ENCODE measurements at regions of chr7 and their contacts with region 1.

Region 1: DNA sequence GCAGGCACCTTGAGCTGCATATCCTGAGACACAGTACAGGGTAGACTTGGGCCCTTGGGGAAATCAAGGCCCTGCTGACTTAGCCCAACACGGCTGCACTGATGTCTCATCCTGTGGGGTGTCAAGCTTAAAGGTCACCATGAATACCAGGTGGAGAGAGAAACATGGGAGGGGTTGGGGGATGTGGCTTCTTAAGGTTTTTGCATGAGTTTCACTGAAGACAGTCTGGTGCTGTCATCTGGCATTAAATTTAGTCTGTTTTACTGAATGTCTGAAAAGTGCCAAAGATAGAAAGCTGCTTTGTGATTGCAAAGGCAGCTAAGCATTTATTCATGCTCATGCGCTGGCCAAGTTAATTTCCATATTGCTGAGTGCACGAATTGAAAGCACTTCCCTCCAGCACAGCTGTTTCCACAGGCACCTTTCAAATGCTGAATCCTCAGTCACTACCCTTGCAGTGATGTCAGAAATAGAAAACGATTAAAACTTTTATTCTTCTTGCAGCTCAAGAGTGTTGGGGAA is 102.1 kb downstream of the OSBPL3 start:
- DNase-seq: peak; percentile 59
- ATAC-seq: peak; percentile 90
- H3K4me3 ChIP-seq: no peak overlapping the region
- H3K4me3 Mint-ChIP-seq: peak overlapping the region; percentile 43
- H3K27ac ChIP-seq: peak overlapping the region in 1 of 2 donors; percentile 43
- H3K27ac Mint-ChIP-seq: peak overlapping the region; percentile 54
- H3K4me1 ChIP-seq: peaks cover 19 to 20% of the 10 kb centered on the region in 2 donors
- H3K4me1 Mint-ChIP-seq: peaks cover 29% of the 10 kb centered on the region
- H3K27me3 ChIP-seq: no peaks in the 10 kb centered on the region
- H3K27me3 Mint-ChIP-seq: no peaks in the 10 kb centered on the region
- CTCF ChIP-seq: no peak

Region 2: GRCh38 chr7:23100697-23101096 is 1777.2 kb before region 1 on chr7:
- CTCF ChIA-PET with region 1: no interaction called
- POLR2A ChIA-PET with region 1: no interaction called
- intact Hi-C with region 1: no loop called
- DNase-seq: no peak
- ATAC-seq: no peak
- H3K4me3 ChIP-seq: no peak overlapping the region
- H3K4me3 Mint-ChIP-seq: no peak overlapping the region
- H3K27ac ChIP-seq: no peak overlapping the region
- H3K27ac Mint-ChIP-seq: no peak overlapping the region
- H3K4me1 ChIP-seq: peaks cover 3 to 5% of the 10 kb centered on the region in 2 donors
- H3K4me1 Mint-ChIP-seq: peaks cover 5% of the 10 kb centered on the region
- H3K27me3 ChIP-seq: peaks cover 0 to 3% (median 0%) of the 10 kb centered on the region in 4 experiments
- H3K27me3 Mint-ChIP-seq: peaks cover 3% of the 10 kb centered on the region
- CTCF ChIP-seq: no peak

Region 3: GRCh38 chr7:24836084-24836483 is 41.8 kb before region 1 on chr7:
- CTCF ChIA-PET with region 1: interaction called, 7 read pairs
- POLR2A ChIA-PET with region 1: interaction called, 3 read pairs
- intact Hi-C with region 1: loop called (anchors 2 kb)
- DNase-seq: peak; percentile 89
- ATAC-seq: peak; percentile 80
- H3K4me3 ChIP-seq: peak overlapping the region in 1 of 5 experiments; percentile 46
- H3K4me3 Mint-ChIP-seq: peak overlapping the region; percentile 80
- H3K27ac ChIP-seq: peak overlapping the region; percentile 97
- H3K27ac Mint-ChIP-seq: peak overlapping the region; percentile 98
- H3K4me1 ChIP-seq: peaks cover 72 to 74% of the 10 kb centered on the region in 2 donors
- H3K4me1 Mint-ChIP-seq: peaks cover 75% of the 10 kb centered on the region
- H3K27me3 ChIP-seq: no peaks in the 10 kb centered on the region
- H3K27me3 Mint-ChIP-seq: no peaks in the 10 kb centered on the region
- CTCF ChIP-seq: no peak

Region 4: DNA sequence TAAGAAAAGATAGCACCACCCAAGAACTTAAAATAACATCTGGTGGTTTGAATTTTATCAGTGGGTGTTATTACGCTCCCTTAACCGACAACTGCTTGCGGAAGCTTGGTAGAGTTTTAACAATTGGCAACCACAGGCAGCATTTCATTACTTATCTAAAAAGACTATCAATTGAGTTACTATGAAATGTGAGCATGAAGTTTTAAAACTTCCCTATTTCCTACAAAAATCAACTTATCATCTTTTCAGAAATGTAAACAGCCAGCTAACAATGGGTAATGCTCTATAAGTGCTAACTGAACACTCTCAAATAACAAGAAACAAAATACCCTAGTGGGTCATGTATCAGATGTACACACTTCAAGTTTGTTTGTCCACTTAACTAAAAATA is 33.4 kb after region 1 on chr7:
- CTCF ChIA-PET with region 1: no interaction called
- POLR2A ChIA-PET with region 1: no interaction called
- intact Hi-C with region 1: loop called (anchors 2 kb)
- DNase-seq: peak; percentile 40
- ATAC-seq: peak; percentile 69
- H3K4me3 ChIP-seq: peak overlapping the region in 1 of 5 experiments; percentile 21
- H3K4me3 Mint-ChIP-seq: peak overlapping the region; percentile 73
- H3K27ac ChIP-seq: peak overlapping the region in 1 of 2 donors; percentile 17
- H3K27ac Mint-ChIP-seq: no peak overlapping the region
- H3K4me1 ChIP-seq: peaks cover 33 to 36% of the 10 kb centered on the region in 2 donors
- H3K4me1 Mint-ChIP-seq: peaks cover 50% of the 10 kb centered on the region
- H3K27me3 ChIP-seq: no peaks in the 10 kb centered on the region
- H3K27me3 Mint-ChIP-seq: no peaks in the 10 kb centered on the region
- CTCF ChIP-seq: no peak

Region 5: GRCh38 chr7:25069900-25070443 is 192.1 kb after region 1 on chr7:
- CTCF ChIA-PET with region 1: interaction called, 13 read pairs
- POLR2A ChIA-PET with region 1: no interaction called
- intact Hi-C with region 1: no loop called
- DNase-seq: peak; percentile 76
- ATAC-seq: peak; percentile 51
- H3K4me3 ChIP-seq: no peak overlapping the region
- H3K4me3 Mint-ChIP-seq: no peak overlapping the region
- H3K27ac ChIP-seq: no peak overlapping the region
- H3K27ac Mint-ChIP-seq: no peak overlapping the region
- H3K4me1 ChIP-seq: peaks cover 0 to 2% of the 10 kb centered on the region in 2 donors
- H3K4me1 Mint-ChIP-seq: peaks cover 2% of the 10 kb centered on the region
- H3K27me3 ChIP-seq: no peaks in the 10 kb centered on the region
- H3K27me3 Mint-ChIP-seq: no peaks in the 10 kb centered on the region
- CTCF ChIP-seq: peak; percentile 95